ENCODE measurements at regions of chr12 and their contacts with region 1.

Region 1: DNA sequence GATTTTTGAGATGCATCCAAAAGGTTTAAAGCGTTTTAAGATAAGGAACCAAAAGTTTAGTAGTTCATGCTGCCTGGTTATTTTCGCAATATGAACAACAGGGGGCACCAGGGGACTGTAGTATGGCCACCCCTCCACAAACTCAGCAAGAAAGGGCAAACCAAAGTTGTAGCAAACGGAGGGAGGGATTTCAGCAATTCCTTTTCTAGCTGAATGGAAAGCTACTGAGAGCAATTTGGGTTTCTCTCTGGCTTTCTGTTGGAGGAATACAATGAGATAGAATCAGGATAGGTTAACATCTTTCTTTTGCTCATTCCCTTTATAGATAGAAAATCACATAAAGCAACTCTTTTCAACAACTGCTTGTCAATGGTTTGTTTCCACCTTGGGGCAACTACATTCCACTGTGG is 62.5 kb downstream of the DRAM1 start:
- DNase-seq: peak; percentile 45
- H3K4me3 Mint-ChIP-seq: no peak overlapping the region
- H3K27ac Mint-ChIP-seq: no peak overlapping the region
- H3K4me1 Mint-ChIP-seq: peaks cover 39% of the 10 kb centered on the region
- H3K27me3 Mint-ChIP-seq: peaks cover 8% of the 10 kb centered on the region

Region 2: GRCh38 chr12:101919447-101919846 is 20.4 kb before region 1 on chr12:
- intact Hi-C with region 1: loop called (anchors 1 kb)
- DNase-seq: no peak
- H3K4me3 Mint-ChIP-seq: no peak overlapping the region
- H3K27ac Mint-ChIP-seq: no peak overlapping the region
- H3K4me1 Mint-ChIP-seq: peaks cover 10% of the 10 kb centered on the region
- H3K27me3 Mint-ChIP-seq: peaks cover 2% of the 10 kb centered on the region

Region 3: DNA sequence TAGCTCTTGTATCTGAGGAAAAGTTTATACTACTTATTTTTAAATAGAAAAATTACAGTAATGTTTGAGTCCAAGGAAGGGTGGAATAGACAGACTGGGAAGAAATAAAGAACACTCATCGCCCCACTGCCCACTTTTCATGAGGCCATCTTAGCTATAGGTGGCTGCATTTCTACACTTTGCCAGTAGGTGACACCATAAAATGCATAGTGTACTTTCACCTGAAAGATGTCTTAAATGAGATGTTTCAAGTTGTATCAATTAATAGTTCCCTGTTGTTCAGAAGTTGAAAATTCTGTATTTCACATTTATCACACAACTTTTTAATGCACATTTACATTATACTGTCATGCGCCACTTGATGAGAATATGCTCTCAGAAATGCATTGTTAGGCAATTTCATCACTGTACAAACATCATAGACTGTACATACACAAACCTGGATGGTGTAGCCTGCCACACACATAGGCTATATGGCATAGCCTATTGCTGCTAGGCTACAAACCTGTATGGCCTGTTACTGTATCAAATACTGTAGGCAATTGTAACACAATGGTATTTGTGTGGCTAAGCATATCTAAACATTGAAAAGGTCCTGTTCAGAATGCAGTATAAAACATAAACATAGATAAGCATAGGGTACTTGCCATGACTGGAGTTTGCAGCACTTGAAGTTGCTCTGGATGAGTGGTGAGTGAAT is 230.2 kb after region 1 on chr12:
- intact Hi-C with region 1: loop called (anchors 1 kb)
- DNase-seq: no peak
- H3K4me3 Mint-ChIP-seq: no peak overlapping the region
- H3K27ac Mint-ChIP-seq: no peak overlapping the region
- H3K4me1 Mint-ChIP-seq: peaks cover 29% of the 10 kb centered on the region
- H3K27me3 Mint-ChIP-seq: no peaks in the 10 kb centered on the region

Region 4: GRCh38 chr12:102300824-102301461 is 361.1 kb after region 1 on chr12:
- intact Hi-C with region 1: loop called (anchors 2 kb)
- DNase-seq: peak; percentile 28
- H3K4me3 Mint-ChIP-seq: no peak overlapping the region
- H3K27ac Mint-ChIP-seq: no peak overlapping the region
- H3K4me1 Mint-ChIP-seq: peaks cover 21% of the 10 kb centered on the region
- H3K27me3 Mint-ChIP-seq: peaks cover 9% of the 10 kb centered on the region

Region 5: GRCh38 chr12:102573237-102573636 is 633.4 kb after region 1 on chr12:
- intact Hi-C with region 1: no loop called
- DNase-seq: no peak
- H3K4me3 Mint-ChIP-seq: no peak overlapping the region
- H3K27ac Mint-ChIP-seq: no peak overlapping the region
- H3K4me1 Mint-ChIP-seq: no peaks in the 10 kb centered on the region
- H3K27me3 Mint-ChIP-seq: no peaks in the 10 kb centered on the region

Region 6: GRCh38 chr12:102675672-102676071 is 735.8 kb after region 1 on chr12:
- intact Hi-C with region 1: no loop called
- DNase-seq: no peak
- H3K4me3 Mint-ChIP-seq: no peak overlapping the region
- H3K27ac Mint-ChIP-seq: no peak overlapping the region
- H3K4me1 Mint-ChIP-seq: no peaks in the 10 kb centered on the region
- H3K27me3 Mint-ChIP-seq: no peaks in the 10 kb centered on the region

Region 7: GRCh38 chr12:102740141-102740955 is 800.5 kb after region 1 on chr12:
- intact Hi-C with region 1: loop called (anchors 1 kb)
- DNase-seq: no peak
- H3K4me3 Mint-ChIP-seq: no peak overlapping the region
- H3K27ac Mint-ChIP-seq: no peak overlapping the region
- H3K4me1 Mint-ChIP-seq: peaks cover 4% of the 10 kb centered on the region
- H3K27me3 Mint-ChIP-seq: peaks cover under 1% of the 10 kb centered on the region

Region 8: DNA sequence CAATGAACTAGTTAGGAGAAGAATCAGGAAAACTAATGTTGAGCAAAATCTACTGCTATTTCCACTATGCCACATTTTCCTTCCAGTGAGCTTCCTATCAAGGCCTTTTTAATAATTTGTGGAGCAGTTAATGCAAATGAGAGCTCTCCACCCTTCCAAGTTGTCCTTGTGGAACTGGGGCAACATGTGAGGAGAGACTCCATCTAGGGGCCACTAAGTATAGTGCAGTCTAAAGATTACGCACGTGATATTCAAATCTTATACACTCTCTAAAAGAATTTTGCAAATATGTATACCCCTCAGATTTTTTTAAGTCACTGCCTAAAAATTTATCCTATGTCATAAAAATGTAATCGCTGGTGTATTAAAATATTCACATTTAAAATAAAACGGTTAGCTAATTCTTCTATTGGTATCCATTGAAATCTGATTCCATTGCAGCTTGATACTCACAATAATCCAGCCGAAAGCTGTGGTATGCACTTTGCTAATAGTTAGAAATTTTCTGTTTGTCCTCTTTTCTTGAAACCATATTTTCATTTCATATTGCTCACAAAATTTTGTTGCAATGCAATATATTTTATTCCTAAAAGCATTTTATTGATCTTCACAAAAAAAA is 877.1 kb after region 1 on chr12:
- intact Hi-C with region 1: loop called (anchors 2 kb)
- DNase-seq: no peak
- H3K4me3 Mint-ChIP-seq: no peak overlapping the region
- H3K27ac Mint-ChIP-seq: no peak overlapping the region
- H3K4me1 Mint-ChIP-seq: no peaks in the 10 kb centered on the region
- H3K27me3 Mint-ChIP-seq: peaks cover 3% of the 10 kb centered on the region

Region 9: DNA sequence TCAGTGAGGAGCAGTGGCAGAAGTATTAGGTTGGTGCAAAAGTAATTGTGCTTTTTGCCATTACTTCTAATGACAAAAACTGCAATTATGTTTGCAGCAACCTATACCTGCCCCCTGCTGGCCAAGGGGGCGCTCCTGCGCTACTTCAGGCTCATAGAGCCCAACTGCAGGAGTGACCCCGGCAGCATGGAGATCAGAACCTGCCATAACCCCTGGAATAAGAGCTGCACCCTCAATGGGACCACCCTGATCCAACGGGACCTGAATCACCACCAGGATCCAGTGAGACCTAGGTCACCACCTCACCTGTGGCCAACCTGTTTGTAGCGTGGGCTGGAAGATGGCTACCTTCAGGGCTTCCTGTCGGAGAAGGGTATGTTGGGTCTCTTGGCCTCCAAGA is 1564.1 kb after region 1 on chr12:
- intact Hi-C with region 1: loop called (anchors 10 kb)
- DNase-seq: peak; percentile 28
- H3K4me3 Mint-ChIP-seq: no peak overlapping the region
- H3K27ac Mint-ChIP-seq: no peak overlapping the region
- H3K4me1 Mint-ChIP-seq: peaks cover 41% of the 10 kb centered on the region
- H3K27me3 Mint-ChIP-seq: peaks cover 19% of the 10 kb centered on the region

Region 10: GRCh38 chr12:103901518-103902173 is 1961.8 kb after region 1 on chr12:
- intact Hi-C with region 1: no loop called
- DNase-seq: no peak
- H3K4me3 Mint-ChIP-seq: peak overlapping the region; percentile 32
- H3K27ac Mint-ChIP-seq: no peak overlapping the region
- H3K4me1 Mint-ChIP-seq: peaks cover 18% of the 10 kb centered on the region
- H3K27me3 Mint-ChIP-seq: no peaks in the 10 kb centered on the region

Measured in activated T-helper 1 cell treated with anti-CD3 and anti-CD28 coated beads, Interleukin-12 subunit alpha, Interleukin-12 subunit beta, Interleukin-2, Interleukin-4 antibody, amounts not matched to agents 30 ng/mL and 10 ng/mL and 1 ng/mL, durations not matched to agents 14 hours and 24 hours and 36 hours (primary cell).